ENCODE measurements at regions of chr4 and their contacts with region 1.

Region 1: DNA sequence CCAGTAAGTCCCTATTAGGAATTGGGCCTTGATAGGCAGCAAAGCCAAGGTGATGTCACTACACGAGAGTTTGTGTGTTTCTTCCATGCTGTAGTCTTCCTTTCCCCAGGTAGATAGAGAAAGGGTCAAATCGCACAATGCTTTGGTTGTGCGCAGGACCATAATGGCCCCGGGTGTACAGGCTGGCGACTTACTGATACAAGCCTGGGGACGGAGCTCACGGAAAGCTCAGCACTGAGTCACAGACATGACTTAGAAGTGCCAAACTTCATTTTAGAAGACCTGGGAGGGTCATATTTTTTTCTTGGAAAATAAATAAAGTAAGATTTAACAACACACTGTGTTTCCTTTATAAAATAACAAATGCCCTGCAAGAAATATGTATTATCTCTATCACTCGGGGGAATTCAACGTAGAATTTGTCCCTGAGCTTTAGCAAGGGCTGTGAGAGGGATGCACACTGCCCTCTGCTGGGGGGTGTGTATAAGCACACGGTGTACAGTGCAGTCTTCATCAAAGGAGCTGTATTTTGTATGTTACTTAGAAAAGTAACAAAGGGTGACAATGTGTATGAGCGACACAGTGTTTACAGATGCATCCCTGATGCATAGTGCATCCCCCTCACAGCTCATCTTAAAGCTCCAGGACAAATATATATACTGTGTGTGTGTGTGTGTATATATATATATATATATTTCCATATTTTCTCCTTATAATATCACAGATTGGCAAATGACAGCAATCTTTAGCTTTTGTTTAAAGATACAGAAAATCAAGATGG is 254.5 kb upstream of the VEGFC start:
- DNase-seq: peak; percentile 16
- H3K4me3 ChIP-seq: no peak overlapping the region
- CTCF ChIP-seq: peak; percentile 66

Region 2: DNA sequence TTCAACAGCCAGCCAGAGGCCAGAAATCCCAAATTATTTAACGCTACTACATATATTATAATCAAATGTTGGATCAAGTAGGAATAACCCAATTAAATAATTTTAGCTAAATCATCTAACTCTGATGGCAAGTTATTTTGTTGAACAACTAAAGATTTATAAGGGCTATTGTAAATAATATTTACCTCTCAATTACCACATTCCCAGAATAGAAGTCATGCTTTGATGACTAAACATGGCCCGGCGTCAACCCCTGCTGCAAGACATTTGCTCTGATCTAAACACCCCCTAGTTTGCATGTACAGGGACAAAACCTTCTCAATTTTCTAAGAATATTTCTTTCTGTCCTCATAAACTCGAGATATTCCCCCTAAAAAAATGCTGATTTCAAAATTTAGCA is 268.8 kb before region 1 on chr4:
- CTCF ChIA-PET with region 1: interaction called, 16 read pairs
- POLR2A ChIA-PET with region 1: no interaction called
- DNase-seq: no peak
- H3K4me3 ChIP-seq: no peak overlapping the region
- CTCF ChIP-seq: no peak

Region 3: DNA sequence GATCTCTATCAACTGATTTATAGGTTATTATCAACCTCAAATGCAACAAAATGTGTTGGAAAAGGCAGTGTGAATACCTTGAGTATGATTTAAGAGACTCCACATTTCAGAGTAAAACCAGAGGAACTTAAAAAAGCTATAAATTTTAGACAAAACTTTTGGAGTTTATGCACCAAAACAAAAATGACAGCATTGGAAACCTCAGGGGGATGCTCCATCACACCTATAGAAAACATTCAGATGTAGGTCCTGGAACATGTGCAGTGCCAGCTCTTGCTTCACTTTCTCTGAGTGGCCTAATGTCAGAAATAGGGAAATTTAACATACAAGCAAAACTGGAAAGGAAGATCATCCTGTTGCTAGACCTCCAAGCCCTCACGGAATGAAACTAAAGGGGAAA is 248.7 kb before region 1 on chr4:
- CTCF ChIA-PET with region 1: interaction called, 52 read pairs
- POLR2A ChIA-PET with region 1: no interaction called
- DNase-seq: no peak
- H3K4me3 ChIP-seq: no peak overlapping the region
- CTCF ChIP-seq: no peak

Region 4: GRCh38 chr4:176971576-176972115 is 75.6 kb before region 1 on chr4:
- CTCF ChIA-PET with region 1: interaction called, 11 read pairs
- POLR2A ChIA-PET with region 1: no interaction called
- DNase-seq: no peak
- H3K4me3 ChIP-seq: no peak overlapping the region
- CTCF ChIP-seq: no peak

Region 5: DNA sequence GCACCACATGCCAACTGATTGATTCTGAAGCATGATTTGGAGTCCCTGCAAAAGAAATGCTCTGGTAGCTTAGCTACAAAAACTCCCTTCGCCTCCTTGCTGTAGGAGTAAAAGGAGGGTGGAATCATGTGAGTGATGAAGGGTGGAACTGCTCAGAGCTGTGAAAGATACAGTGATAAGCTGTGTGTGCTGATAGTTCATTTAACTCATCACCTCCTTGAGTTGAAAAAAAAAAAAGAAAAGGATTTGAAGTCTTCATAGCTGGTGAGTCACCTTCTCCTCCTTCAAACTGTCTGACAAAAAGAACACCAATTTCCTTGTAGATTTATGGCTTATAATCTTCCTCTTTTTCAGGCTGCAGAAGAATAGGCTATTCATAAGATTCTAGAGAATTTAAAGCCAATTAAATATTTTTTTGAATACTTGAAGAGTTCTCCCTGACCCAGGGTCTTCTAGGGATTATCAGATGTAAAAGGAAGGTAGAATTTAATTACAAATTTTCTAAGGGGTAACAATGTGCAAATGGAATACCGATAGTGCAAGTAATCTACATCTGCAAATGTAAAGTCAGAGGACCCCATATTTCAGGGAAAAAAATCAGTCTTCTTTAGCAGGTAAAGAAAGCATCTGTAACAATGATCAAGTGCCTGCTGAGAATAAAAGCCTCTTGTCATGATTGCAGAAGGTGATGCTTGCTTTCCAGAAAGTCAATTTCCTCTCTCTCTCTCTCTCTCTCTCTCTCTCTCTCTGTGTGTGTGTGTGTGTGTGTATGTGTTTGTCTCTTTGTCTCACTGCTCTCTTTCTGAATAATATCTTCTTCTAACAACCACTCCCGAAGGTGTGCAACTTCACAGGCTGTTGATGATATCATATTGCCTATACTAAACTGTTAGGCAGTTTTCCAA is 45.7 kb before region 1 on chr4:
- CTCF ChIA-PET with region 1: no interaction called
- POLR2A ChIA-PET with region 1: no interaction called
- DNase-seq: no peak
- H3K4me3 ChIP-seq: no peak overlapping the region
- CTCF ChIP-seq: no peak

Region 6: GRCh38 chr4:177033135-177033534 is 14.1 kb before region 1 on chr4:
- CTCF ChIA-PET with region 1: interaction called, 24 read pairs
- POLR2A ChIA-PET with region 1: no interaction called
- DNase-seq: no peak
- H3K4me3 ChIP-seq: no peak overlapping the region
- CTCF ChIP-seq: no peak

Region 7: GRCh38 chr4:177596035-177596434 is 548.8 kb after region 1 on chr4:
- CTCF ChIA-PET with region 1: no interaction called
- POLR2A ChIA-PET with region 1: no interaction called
- DNase-seq: peak; percentile 3
- H3K4me3 ChIP-seq: no peak overlapping the region
- CTCF ChIP-seq: no peak